AG04449 (cell line): ENCODE measurements at regions of chr10 and their contacts with region 1.

Region 1: DNA sequence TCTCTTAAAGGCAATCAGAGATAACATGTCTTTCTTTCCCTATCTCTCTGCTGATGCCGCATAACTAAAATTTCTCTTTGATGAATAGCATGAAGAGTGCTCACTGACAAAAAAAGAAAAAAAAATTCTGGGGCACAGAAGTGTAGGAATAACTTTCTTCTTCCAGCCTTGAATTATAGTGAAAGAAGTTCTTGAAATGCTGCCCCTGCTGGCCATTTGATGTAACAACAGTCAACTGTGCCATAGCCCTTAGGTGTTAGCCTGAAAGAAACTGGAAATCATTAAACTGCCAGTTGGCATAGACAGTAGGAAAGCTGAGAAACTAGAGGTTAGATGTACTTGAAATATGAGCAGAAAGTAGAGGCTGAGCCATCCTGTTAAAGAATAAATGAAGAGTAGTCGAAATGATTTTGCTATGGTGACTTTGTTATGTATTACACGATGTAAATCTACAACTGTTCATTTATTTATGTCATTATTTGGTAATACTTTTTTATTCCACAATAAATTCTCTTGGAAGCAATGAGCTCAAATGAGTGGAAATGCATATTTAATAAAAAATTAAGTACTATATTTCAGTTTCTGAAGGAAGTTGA is 48.3 kb upstream of the FAM171A1 start:
- DNase-seq: no peak
- H3K4me3 ChIP-seq: no peak overlapping the region
- CTCF ChIP-seq: peak; percentile 58

Region 2: DNA sequence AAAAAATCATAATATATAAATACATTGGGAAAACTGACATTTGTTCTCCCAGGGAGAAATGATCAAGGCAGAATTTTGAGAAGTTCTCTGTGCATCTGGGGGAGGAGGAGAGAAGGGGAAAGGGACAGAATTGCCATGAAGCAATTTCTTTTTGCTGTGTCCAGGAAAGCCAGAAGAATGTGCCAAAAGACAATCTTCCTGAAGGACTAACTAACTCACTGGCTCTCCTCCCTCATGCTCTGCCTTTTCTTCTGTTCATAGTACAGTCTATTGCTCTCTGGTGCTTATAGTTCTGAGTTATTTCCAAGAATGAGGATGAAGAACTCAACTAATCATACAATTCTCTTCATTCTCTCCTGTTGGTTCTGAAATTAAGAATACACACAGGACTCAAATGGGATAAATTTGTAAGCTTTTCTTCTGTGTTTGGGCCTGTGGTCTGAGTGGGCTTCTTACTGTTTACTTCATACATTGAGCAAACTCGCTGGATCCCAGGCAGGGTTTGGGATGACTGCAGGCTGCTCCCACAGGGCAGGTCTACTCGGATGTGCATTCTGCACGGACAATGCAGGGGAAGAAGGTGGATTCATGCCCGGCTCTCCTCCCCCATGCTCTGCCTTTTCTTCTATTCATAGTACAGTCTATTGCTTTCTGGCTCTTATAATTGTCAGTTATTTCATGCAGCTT is 26.1 kb before region 1 on chr10:
- CTCF ChIA-PET with region 1: no interaction called
- POLR2A ChIA-PET with region 1: no interaction called
- DNase-seq: no peak
- H3K4me3 ChIP-seq: no peak overlapping the region
- CTCF ChIP-seq: no peak

Region 3: GRCh38 chr10:15433850-15434537 is 14.6 kb after region 1 on chr10:
- CTCF ChIA-PET with region 1: interaction called, 24 read pairs
- POLR2A ChIA-PET with region 1: no interaction called
- DNase-seq: no peak
- H3K4me3 ChIP-seq: peak overlapping the region; percentile 56
- CTCF ChIP-seq: peak; percentile 36